H1 (cell line): ENCODE measurements at regions of chr15 and their contacts with region 1.

Region 1: DNA sequence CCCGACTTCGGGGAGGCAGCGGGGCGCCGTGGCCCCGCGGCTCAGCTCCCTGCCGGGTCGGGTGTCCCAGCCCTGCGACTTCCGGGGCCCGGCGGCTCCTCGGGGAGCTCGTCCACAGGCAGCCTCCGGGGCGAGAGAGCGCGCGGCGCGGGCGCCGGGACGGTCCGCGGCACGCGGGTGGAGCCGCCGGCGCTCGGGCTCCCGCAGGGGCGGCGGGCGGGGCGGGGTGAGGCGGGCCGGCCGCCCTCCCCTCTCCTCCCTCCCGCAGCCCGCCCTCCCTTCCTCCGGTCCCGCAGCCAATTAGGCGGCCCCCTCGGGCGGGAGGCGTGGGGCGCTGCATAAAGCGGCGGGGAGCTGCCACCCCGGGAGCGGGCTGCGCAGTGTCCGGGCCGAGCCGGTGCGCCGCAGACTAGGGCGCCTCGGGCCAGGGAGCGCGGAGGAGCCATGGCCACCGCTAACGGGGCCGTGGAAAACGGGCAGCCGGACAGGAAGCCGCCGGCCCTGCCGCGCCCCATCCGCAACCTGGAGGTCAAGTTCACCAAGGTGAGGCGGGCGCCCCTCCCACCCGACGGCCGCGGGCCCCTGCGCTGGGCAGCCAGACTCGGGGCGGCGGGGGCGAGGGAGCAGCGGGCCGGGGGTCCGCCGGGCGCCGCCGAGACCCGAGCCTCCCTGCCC is at the start of gene ALDH1A3:
- DNase-seq: no peak
- H3K4me3 ChIP-seq: peak within 1 kb of the TSS; percentile 37 to 59 (median 46)
- H3K27ac ChIP-seq: no peak within 1 kb of the TSS
- H3K4me1 ChIP-seq: peaks cover 0 to 13% (median 8%) of the 10 kb centered on the region in 4 experiments; a peak in 5 of 7 replicates
- H3K27me3 ChIP-seq: peaks cover 16 to 52% (median 48%) of the 10 kb centered on the region in 4 experiments
- CTCF ChIP-seq: no peak
- EP300 ChIP-seq: no peak
- POLR2A ChIP-seq: no peak
- RAD21 ChIP-seq: no peak
- total RNA-seq, gene ALDH1A3: 5.5 and 5.7 TPM in 2 replicates

Region 2: GRCh38 chr15:100671858-100672543 is 207.6 kb before region 1 on chr15:
- CTCF ChIA-PET with region 1: interaction called, 26 read pairs
- POLR2A ChIA-PET with region 1: no interaction called
- DNase-seq: no peak
- H3K4me3 ChIP-seq: no peak overlapping the region
- H3K27ac ChIP-seq: no peak overlapping the region
- H3K4me1 ChIP-seq: no peaks in the 10 kb centered on the region
- H3K27me3 ChIP-seq: no peaks in the 10 kb centered on the region
- CTCF ChIP-seq: peak; percentile 61 to 70 (median 67)
- EP300 ChIP-seq: no peak
- POLR2A ChIP-seq: no peak
- RAD21 ChIP-seq: peak; percentile 83 to 84

Region 3: DNA sequence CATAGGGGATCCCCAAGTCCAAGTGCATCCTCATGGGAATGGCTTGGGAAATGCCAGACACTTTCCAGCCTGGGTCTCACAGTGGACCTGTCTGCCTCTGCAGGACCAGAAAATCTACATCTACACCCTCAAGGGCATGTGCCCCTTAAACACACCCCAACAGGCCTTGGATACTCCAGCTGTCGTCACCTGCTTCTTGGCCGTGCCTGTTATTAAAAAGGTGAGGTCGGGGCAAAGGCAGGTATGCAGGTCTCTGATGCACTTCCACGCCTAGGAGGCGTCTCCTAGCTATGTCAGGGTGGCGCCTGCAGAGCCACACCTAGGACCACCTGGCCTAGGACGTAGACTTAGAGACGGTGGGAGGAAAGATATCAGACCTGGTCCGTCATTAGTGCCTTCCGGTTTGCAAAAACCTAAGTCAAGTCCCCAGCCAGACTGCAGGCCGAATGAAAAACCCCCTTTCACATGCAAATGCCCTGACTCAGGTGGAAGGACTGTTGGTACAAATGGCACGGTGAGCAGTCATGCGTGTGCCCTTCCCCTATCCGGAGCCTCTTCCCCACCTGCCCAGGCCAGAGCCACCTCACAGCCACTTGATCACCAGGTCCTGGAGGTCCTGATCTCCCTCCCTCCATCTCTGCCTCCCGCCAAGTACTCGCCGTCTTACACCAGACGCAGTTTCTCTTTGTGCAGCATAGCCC is 183.0 kb after region 1 on chr15:
- CTCF ChIA-PET with region 1: no interaction called
- POLR2A ChIA-PET with region 1: no interaction called
- DNase-seq: peak in 1 of 2 experiments; percentile 63
- H3K4me3 ChIP-seq: no peak overlapping the region
- H3K27ac ChIP-seq: no peak overlapping the region
- H3K4me1 ChIP-seq: peaks cover 13 to 33% (median 21%) of the 10 kb centered on the region in 4 experiments
- H3K27me3 ChIP-seq: no peaks in the 10 kb centered on the region
- CTCF ChIP-seq: no peak
- EP300 ChIP-seq: no peak
- POLR2A ChIP-seq: no peak
- RAD21 ChIP-seq: no peak